Right lobe of liver (tissue), 6 donors: ENCODE measurements at regions of chr1 and their contacts with region 1.

Region 1: DNA sequence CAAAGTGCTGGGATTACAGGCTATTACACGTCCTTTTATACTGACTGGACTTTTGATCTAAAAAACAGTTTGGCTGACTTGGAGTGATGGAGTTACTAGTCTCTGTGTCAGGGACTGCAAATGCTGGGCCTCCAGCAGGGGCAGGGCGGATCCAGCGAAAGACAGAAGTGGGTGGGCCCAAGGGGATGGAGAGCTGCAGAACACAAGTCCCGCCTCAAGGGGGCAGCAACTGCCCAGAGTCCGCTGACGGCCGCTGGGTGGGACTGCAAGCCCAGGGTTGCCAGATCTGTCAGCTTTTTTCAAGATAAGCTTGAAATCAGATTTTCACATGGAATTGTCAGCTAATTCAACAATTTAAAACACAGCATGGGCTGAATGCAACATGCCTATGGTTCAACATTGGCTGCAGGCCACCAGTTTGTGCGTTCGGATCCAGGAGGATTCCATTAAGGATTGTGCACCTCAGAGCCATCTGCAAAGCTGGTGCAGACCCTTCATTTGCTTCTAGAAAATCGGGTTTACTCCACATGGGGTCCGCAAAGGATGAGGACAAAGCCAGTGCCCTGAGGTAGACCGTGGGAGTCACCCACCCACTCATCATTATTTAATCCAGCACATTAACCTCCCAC is 10.7 kb downstream of the STMN1 start:
- DNase-seq: peak; percentile 87 to 89 (median 87)
- ATAC-seq: peak; percentile 97 to 100 (median 98)
- H3K4me3 ChIP-seq: no peak overlapping the region
- H3K27ac ChIP-seq: no peak overlapping the region
- H3K4me1 ChIP-seq: peaks cover 0 to 13% (median 6%) of the 10 kb centered on the region in 4 donors
- H3K27me3 ChIP-seq: no peaks in the 10 kb centered on the region
- CTCF ChIP-seq: peak; percentile 97 to 99 (median 98)
- POLR2A ChIP-seq: no peak

Region 2: GRCh38 chr1:25997828-25998761 is 102.6 kb after region 1 on chr1 and contains the start of gene PAFAH2:
- intact Hi-C with region 1: loop called (anchors 5 kb)
- DNase-seq: peak; percentile 96 to 98 (median 98)
- ATAC-seq: peak; percentile 98 to 99 (median 98)
- H3K4me3 ChIP-seq: peak within 1 kb of the TSS; percentile 54 to 81 (median 80)
- H3K27ac ChIP-seq: peak within 1 kb of the TSS; percentile 64 to 81 (median 78)
- H3K4me1 ChIP-seq: peaks cover 0 to 14% (median 4%) of the 10 kb centered on the region in 4 donors
- H3K27me3 ChIP-seq: no peaks in the 10 kb centered on the region
- CTCF ChIP-seq: peak; percentile 98 to 100 (median 98)
- POLR2A ChIP-seq: no peak
- total RNA-seq, gene PAFAH2: 13.2 to 25.2 (median 18.6) TPM

Region 3: DNA sequence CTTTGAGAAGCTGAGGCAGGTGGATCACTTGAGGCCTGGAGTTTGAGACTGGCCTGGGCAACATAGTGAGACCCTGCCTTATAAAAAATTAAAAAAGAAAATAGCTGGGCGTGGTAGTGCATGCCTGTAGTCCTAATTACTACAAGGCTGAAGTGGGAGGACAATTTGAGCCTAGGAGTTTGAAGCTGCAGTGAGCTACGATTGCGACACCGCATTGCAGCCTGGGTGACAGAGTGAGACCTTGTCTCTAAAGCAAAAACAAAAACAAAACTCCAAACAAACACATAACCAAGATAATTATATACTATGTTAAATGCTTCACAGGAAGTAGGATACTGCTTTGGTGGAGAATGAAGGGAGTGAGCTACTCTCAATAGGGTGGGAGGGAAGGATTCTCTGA is 107.8 kb after region 1 on chr1:
- intact Hi-C with region 1: loop called (anchors 5 kb)
- DNase-seq: no peak
- ATAC-seq: no peak
- H3K4me3 ChIP-seq: no peak overlapping the region
- H3K27ac ChIP-seq: no peak overlapping the region
- H3K4me1 ChIP-seq: peaks cover 0 to 5% (median 0%) of the 10 kb centered on the region in 4 donors
- H3K27me3 ChIP-seq: no peaks in the 10 kb centered on the region
- CTCF ChIP-seq: no peak
- POLR2A ChIP-seq: no peak